ENCODE measurements at regions of chr10 and their contacts with region 1.

Region 1: GRCh38 chr10:112314822-112315474 is 31.7 kb downstream of the TECTB start:
- DNase-seq: peak; percentile 75
- CTCF ChIP-seq: peak; percentile 78

Region 2: DNA sequence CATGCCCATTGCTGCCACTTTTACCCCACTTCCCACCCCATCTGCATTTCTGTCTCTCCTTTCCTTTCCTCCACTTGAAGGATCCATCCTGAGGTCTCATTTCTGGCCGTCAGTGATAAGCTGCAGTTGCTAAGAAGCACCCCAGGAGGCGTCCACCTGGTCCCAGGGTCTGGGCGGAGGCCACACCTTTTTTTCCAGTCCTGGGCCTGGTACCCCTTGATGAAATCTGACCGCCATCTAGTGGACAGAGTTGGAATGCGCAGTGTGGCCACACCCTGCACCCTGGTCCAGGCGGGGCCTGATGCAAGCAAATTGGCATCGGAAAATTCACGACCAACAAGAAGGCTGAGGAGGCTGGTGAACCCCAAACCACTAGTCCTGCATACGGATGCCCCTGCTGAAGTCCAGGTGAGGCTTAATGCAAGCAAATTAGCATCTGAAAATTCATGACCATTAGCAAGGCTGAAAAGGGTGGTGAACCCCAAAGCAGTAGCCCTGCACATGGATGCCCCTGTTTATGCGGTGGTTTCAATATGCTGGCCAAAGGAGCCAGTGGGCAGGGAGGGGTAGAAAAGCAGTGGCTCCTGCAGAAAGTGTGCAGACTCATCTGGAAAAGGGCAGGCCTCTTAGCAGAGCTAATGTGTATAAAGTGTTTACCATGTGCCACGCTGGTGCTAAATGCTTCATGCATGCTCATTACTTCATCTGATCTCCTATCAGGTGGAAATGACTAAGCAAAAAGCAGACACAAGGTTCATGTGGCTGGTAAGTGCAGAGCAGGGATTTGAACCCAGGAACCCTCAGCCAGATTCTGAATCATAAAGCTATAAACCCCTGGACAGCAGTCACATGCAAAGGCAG is 174.6 kb before region 1 on chr10:
- in situ Hi-C with region 1: loop called (anchors 25 kb)
- DNase-seq: peak; percentile 79
- CTCF ChIP-seq: peak; percentile 88

Region 3: DNA sequence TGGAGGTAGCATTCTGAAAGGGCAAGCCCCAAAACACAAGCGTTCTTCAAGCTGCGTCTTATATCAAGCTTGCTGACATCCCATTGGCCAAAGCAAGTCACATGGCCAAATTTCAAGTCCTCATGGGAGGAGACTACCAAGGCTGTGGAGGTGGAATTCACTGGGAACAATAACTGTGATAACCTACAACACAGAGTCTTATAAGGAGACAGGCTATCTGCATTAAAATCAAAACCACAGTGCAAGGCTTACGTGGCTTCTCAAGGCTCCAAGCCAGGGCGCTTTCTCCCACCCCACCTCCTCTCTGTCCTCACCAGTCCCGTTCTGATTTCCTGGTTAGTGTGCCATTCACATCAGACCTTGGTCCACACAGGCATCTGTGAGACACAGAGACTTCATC is 1768.1 kb after region 1 on chr10:
- in situ Hi-C with region 1: no loop called
- DNase-seq: no peak
- CTCF ChIP-seq: no peak